ENCODE measurements at regions of chr15 and their contacts with region 1.

Region 1: GRCh38 chr15:22949074-22949547 is 31.1 kb downstream of the CYFIP1 start:
- DNase-seq: peak; percentile 80
- H3K4me3 ChIP-seq: peak overlapping the region in 2 of 3 experiments; percentile 20 to 25
- H3K27ac ChIP-seq: no peak overlapping the region
- H3K4me1 ChIP-seq: peaks cover 53% of the 10 kb centered on the region
- H3K27me3 ChIP-seq: no peaks in the 10 kb centered on the region
- CTCF ChIP-seq: no peak

Region 2: DNA sequence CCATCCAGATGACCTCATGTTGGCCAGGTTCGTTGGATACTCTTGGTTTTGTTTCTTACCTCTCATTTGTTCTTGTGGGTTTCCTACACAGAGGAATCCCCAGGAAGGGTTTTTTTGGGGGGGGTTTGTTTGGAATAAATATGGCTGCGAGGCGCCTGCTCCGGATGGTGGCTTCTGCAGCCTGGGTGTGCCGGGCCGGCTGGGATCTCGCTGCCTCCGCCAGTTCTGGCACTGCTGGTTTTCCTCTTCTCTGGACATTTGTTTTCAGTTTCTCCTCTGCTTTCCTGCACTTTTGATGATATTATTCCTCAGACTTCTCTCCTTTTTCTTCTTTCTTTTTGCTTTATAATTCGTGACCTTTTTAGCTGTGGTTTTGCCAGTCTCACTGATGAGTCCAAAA is 681.4 kb before region 1 on chr15:
- CTCF ChIA-PET with region 1: no interaction called
- dilution Hi-C with region 1: no loop called
- in situ Hi-C with region 1: no loop called
- intact Hi-C with region 1: no loop called
- DNase-seq: no peak
- H3K4me3 ChIP-seq: no peak overlapping the region
- H3K27ac ChIP-seq: no peak overlapping the region
- H3K4me1 ChIP-seq: peaks cover 13% of the 10 kb centered on the region
- H3K27me3 ChIP-seq: no peaks in the 10 kb centered on the region
- CTCF ChIP-seq: no peak

Region 3: GRCh38 chr15:22850055-22850454 is 99.1 kb before region 1 on chr15:
- CTCF ChIA-PET with region 1: no interaction called
- dilution Hi-C with region 1: no loop called
- in situ Hi-C with region 1: loop called in 1 of 2 experiments (anchors 10 kb)
- intact Hi-C with region 1: no loop called
- DNase-seq: no peak
- H3K4me3 ChIP-seq: no peak overlapping the region
- H3K27ac ChIP-seq: no peak overlapping the region
- H3K4me1 ChIP-seq: no peaks in the 10 kb centered on the region
- H3K27me3 ChIP-seq: no peaks in the 10 kb centered on the region
- CTCF ChIP-seq: no peak

Region 4: GRCh38 chr15:22930782-22931484 is 18.2 kb before region 1 on chr15:
- CTCF ChIA-PET with region 1: no interaction called
- dilution Hi-C with region 1: no loop called
- in situ Hi-C with region 1: no loop called
- intact Hi-C with region 1: loop called (anchors 1 kb)
- DNase-seq: peak; percentile 62
- H3K4me3 ChIP-seq: no peak overlapping the region
- H3K27ac ChIP-seq: no peak overlapping the region
- H3K4me1 ChIP-seq: peaks cover 12% of the 10 kb centered on the region
- H3K27me3 ChIP-seq: no peaks in the 10 kb centered on the region
- CTCF ChIP-seq: no peak

Region 5: GRCh38 chr15:22980189-22981050 is 31.3 kb after region 1 on chr15 and contains the start of gene CYFIP1:
- CTCF ChIA-PET with region 1: no interaction called
- dilution Hi-C with region 1: no loop called
- in situ Hi-C with region 1: no loop called
- intact Hi-C with region 1: loop called (anchors 2 kb)
- DNase-seq: peak; percentile 91
- H3K4me3 ChIP-seq: peak within 1 kb of the TSS; percentile 66 to 88 (median 72)
- H3K27ac ChIP-seq: peak within 1 kb of the TSS; percentile 71
- H3K4me1 ChIP-seq: peaks cover 11% of the 10 kb centered on the region
- H3K27me3 ChIP-seq: no peaks in the 10 kb centered on the region
- CTCF ChIP-seq: no peak
- total RNA-seq, gene CYFIP1: 128 to 158 TPM

Region 6: DNA sequence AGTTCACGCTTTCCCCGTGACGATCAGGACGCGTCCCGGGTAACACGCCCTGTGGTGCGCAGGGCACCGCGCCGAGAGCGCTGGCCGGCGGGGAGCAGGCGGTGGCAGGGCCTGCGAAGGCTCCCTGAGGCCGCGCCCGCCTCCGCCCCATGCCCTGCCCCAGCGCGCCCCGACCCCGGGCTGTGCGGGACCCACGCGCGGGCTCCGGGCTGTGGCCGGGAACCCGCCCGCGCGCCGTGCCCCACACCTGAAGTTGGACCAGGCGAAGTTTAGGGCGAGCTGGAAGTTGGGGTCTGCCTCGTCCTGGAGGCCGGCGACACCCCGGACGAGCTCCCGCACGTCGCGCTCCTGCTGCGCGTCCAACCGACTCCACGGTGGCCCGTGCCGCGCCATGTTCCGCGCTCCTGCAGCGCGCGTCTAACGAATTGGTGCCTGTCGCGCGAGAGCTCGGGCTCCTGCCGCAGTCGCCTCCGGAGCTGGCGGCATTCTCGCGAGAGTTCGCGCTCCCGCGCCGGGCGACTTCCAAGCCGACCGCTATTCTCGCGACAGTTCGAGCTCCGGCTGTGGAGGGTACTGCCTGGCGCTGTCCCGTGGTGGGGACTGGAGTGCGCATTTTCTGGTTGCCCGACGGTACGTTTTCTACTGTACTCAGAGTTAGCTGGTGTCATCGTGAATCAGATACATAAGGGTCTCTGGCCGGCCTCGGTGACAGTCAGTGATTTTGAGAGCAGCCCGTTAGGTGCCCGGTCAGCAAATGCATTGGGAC is 90.2 kb after region 1 on chr15 and contains the start of gene TUBGCP5:
- CTCF ChIA-PET with region 1: no interaction called
- dilution Hi-C with region 1: no loop called
- in situ Hi-C with region 1: no loop called
- intact Hi-C with region 1: loop called (anchors 10 kb)
- DNase-seq: peak; percentile 96
- H3K4me3 ChIP-seq: peak within 1 kb of the TSS; percentile 79 to 94 (median 88)
- H3K27ac ChIP-seq: peak within 1 kb of the TSS; percentile 81
- H3K4me1 ChIP-seq: no peaks in the 10 kb centered on the region
- H3K27me3 ChIP-seq: no peaks in the 10 kb centered on the region
- CTCF ChIP-seq: peak; percentile 4 to 49
- total RNA-seq, gene TUBGCP5: 17.0 to 21.5 TPM

Measured in mammary epithelial cell (primary cell).